ENCODE measurements at regions of chr6 and their contacts with region 1.

Region 1: DNA sequence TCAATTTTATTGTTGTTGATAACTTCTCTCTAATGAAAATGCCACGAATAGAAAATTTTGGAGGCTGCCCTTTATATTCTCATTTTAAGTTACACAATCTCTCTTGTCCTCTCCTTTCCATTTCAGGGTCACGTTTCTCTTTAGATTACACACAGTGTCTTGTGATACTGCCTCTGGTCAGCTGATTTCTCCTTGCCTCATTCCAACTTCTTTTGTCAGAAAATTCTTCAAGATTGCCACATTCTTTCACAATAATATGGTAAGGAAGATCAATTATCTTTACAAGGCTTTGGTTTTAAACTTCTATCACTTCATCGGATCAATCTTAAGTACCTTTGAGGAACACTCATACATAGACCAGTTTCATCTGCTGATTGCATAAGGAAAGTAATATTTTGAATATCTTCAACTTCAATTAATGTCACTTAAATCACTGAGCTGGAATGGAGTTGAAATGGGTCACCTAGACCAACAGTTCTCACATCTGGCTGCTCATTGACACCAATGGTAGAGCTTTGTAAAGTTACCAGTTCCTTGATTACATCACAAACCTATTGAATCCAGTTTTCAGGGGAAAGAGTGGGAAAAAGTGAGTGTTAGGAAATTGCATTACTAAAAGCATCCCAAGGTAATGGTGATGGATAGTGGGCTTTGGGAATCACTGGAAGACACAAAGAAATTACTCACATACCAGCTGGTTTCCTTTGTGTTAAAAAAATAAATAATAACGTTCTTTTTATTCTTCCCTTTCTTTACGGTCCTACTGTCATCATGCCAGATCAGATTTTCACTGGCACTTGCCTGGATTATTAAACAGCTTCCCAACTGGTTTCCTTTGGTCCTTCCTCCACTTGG is 370.5 kb downstream of the RFPL4B start:
- DNase-seq: no peak
- ATAC-seq: no peak
- H3K4me3 ChIP-seq: no peak overlapping the region
- H3K27ac ChIP-seq: no peak overlapping the region
- H3K4me1 ChIP-seq: no peaks in the 10 kb centered on the region
- H3K27me3 ChIP-seq: no peaks in the 10 kb centered on the region
- CTCF ChIP-seq: no peak

Region 2: DNA sequence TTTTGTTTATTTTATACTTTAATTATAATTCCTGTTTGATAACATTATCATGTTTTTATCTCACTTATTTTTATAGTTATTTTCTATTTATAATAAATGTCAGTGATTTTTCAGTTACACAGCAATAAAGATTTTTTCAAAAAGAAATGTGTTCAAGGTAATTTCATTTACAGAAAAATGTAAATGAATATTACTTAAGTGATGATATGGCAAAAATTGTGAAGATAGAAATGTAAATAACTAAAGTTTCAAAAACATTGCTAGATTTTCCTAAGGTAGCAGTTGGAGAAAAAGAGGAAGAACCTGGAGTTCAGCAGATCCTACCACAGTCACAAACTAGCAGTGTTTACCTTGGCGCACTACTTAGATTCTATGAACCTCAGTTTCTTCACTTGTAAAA is 167.9 kb before region 1 on chr6:
- CTCF ChIA-PET with region 1: interaction called, 15 read pairs
- POLR2A ChIA-PET with region 1: no interaction called
- in situ Hi-C with region 1: no loop called
- intact Hi-C with region 1: no loop called
- DNase-seq: no peak
- ATAC-seq: no peak
- H3K4me3 ChIP-seq: no peak overlapping the region
- H3K27ac ChIP-seq: no peak overlapping the region
- H3K4me1 ChIP-seq: no peaks in the 10 kb centered on the region
- H3K27me3 ChIP-seq: no peaks in the 10 kb centered on the region
- CTCF ChIP-seq: no peak

Region 3: DNA sequence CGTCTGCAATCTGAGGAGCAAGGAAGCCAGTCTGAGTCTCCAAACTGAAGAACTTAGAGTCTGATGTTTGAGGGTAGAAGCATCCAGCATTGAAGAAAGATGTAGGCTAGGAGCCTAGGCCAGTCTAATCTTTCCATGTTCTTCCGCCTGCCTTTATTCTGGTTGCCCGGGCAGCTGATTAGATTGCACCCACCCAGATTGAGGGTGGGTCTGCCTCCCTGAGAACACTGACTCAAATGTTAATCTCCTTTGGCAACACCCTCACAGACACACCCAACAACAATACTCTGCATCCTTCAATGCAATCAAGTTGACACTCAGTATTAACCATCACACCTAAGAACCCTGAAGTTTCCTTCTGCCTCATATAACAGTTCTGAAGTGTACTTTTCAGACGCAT is 20.4 kb before region 1 on chr6:
- CTCF ChIA-PET with region 1: interaction called, 10 read pairs
- POLR2A ChIA-PET with region 1: no interaction called
- in situ Hi-C with region 1: no loop called
- intact Hi-C with region 1: no loop called
- DNase-seq: no peak
- ATAC-seq: no peak
- H3K4me3 ChIP-seq: no peak overlapping the region
- H3K27ac ChIP-seq: no peak overlapping the region
- H3K4me1 ChIP-seq: peaks cover 5% of the 10 kb centered on the region; the same call in 1 of the 2 replicates
- H3K27me3 ChIP-seq: no peaks in the 10 kb centered on the region
- CTCF ChIP-seq: no peak